Breast epithelium (tissue), 4 donors: ENCODE measurements at regions of chr14 and their contacts with region 1.

Region 1: GRCh38 chr14:21589317-21589716 is 9.4 kb upstream of the OR10G3 start:
- DNase-seq: no peak
- H3K4me3 ChIP-seq: no peak overlapping the region
- H3K27ac ChIP-seq: no peak overlapping the region
- H3K4me1 ChIP-seq: no peaks in the 10 kb centered on the region
- H3K27me3 ChIP-seq: peaks cover 0 to 5% of the 10 kb centered on the region in 2 donors
- CTCF ChIP-seq: no peak
- POLR2A ChIP-seq: no peak

Region 2: DNA sequence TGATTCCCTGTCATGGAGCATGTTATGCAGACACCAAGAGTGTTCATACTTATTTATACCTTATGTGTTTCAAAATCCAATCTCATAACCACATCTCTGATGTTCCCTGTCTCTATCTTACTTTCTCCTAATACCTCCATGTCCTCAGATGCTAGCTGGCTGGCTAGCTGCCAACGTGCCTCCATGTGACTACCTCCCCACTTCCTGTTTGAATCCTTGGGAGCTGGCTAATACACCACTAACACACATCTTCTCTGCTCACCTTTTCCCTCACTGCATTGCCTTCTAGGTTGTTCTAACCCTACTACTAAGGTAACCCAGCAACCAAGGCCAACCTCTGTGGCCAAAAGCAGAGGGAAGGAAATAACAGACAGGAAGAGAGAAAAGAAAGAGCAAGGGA is 1310.9 kb before region 1 on chr14:
- intact Hi-C with region 1: no loop called
- DNase-seq: no peak
- H3K4me3 ChIP-seq: no peak overlapping the region
- H3K27ac ChIP-seq: no peak overlapping the region
- H3K4me1 ChIP-seq: no peaks in the 10 kb centered on the region
- H3K27me3 ChIP-seq: no peaks in the 10 kb centered on the region
- CTCF ChIP-seq: no peak
- POLR2A ChIP-seq: no peak

Region 3: DNA sequence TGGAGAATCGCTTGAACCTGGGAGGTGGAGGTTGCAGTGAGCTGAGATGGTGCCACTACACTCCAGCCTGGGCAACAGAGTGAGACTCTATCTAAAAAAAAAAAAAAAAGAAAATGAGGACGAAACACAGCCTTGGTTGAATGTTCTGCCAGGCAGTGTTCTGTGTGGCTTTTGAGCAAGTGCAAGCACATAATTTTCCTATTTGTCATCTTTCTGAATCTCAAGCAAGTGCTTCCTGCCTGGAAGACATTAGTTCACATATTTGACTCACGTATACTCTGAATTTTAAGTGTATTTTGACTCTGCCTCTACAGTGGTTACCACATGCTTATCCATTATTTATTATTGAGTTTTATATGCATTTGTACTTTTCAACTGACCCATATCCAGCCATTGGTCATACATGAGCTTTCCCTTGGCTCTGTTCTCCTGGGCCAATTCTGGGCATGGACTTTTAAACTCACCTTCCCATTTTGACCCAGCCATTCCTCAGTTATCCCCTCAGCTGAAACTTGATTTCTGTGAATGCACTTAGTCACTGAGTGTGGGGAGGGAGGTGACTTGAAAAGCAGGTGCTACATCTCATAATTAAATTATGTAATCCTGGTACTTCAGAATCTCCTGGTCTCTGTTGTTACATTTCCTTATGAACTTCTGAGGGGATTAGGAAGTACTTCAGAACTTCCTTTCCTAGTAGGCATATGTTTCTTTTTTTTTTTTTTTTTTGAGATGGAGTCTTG is 37.3 kb after region 1 on chr14:
- intact Hi-C with region 1: loop called (anchors 2 kb)
- DNase-seq: no peak
- H3K4me3 ChIP-seq: no peak overlapping the region
- H3K27ac ChIP-seq: no peak overlapping the region
- H3K4me1 ChIP-seq: no peaks in the 10 kb centered on the region
- H3K27me3 ChIP-seq: no peaks in the 10 kb centered on the region
- CTCF ChIP-seq: no peak
- POLR2A ChIP-seq: no peak